H1 (cell line): ENCODE measurements at regions of chr4 and their contacts with region 1.

Region 1: DNA sequence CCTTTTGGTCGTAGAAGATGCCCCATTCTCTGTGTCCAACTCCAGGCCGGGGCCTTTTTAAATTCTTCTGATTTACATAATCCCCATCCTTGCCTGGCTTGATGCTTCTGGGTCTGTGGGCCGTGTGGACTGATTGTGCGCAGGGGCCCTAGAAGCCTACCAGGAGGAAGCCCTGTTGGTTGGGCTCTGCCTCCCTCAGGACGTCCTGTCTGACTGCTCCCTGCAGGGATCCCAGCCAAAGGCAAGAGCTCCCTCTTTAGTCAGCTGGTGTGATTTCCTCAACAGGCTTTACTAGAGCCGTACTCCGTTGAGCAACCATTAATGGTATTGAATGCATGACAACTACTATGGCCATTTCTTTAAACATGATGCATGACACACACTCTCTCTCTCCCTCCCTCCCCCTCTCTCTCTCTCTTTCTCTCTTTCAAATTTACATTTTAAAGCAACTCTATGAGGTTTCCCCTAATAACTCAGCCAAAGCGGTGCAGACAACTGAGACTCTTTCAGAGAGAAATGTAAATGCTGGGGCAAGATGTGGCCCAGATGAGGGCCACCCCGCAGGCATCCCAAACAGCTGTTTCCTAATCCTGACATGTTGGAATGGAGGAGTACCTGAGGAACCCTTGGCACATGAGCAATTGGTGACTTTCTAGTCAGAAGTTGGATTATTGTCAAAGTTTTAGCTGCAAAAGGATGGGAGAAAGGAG is 117.3 kb downstream of the DRD5 start:
- DNase-seq: peak; percentile 68 to 71
- H3K4me3 ChIP-seq: no peak overlapping the region
- H3K27ac ChIP-seq: no peak overlapping the region
- H3K4me1 ChIP-seq: peaks cover 0 to 3% (median 0%) of the 10 kb centered on the region in 4 experiments; a peak in 2 of 7 replicates
- H3K27me3 ChIP-seq: no peaks in the 10 kb centered on the region
- CTCF ChIP-seq: peak; percentile 56 to 90 (median 79)
- EP300 ChIP-seq: no peak
- POLR2A ChIP-seq: no peak
- RAD21 ChIP-seq: peak; percentile 84 to 91

Region 2: GRCh38 chr4:9885958-9886357 is 12.8 kb before region 1 on chr4:
- CTCF ChIA-PET with region 1: interaction called, 17 read pairs
- POLR2A ChIA-PET with region 1: no interaction called
- DNase-seq: no peak
- H3K4me3 ChIP-seq: no peak overlapping the region
- H3K27ac ChIP-seq: no peak overlapping the region
- H3K4me1 ChIP-seq: peaks cover 2 to 14% (median 8%) of the 10 kb centered on the region in 4 experiments
- H3K27me3 ChIP-seq: no peaks in the 10 kb centered on the region; a peak in 1 of 7 replicates
- CTCF ChIP-seq: no peak
- EP300 ChIP-seq: no peak
- POLR2A ChIP-seq: no peak
- RAD21 ChIP-seq: no peak

Region 3: DNA sequence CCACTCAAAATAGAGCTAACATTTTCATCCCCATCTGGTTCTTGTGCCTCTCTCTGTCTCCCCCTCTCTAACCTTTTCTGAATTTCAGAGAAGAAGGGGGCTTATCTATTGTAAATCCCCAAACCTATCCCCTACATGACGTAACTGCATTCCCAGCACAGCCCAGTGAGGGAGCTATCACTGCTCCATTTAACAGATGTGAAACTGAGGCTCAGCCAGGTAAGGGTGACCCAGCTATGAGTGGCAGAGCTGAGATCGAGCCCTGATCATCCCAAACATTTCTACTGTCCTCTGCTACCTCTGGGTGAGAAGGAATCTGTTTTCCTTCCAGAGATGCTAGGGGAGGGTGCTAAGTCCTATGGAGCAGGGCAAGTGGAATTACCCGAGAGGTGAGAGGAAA is 15.1 kb after region 1 on chr4:
- CTCF ChIA-PET with region 1: interaction called, 31 read pairs
- POLR2A ChIA-PET with region 1: no interaction called
- DNase-seq: no peak
- H3K4me3 ChIP-seq: no peak overlapping the region
- H3K27ac ChIP-seq: no peak overlapping the region
- H3K4me1 ChIP-seq: no peaks in the 10 kb centered on the region
- H3K27me3 ChIP-seq: no peaks in the 10 kb centered on the region
- CTCF ChIP-seq: no peak
- EP300 ChIP-seq: no peak
- POLR2A ChIP-seq: no peak
- RAD21 ChIP-seq: no peak

Region 4: GRCh38 chr4:9919047-9919446 is 20.3 kb after region 1 on chr4:
- CTCF ChIA-PET with region 1: interaction called, 31 read pairs
- POLR2A ChIA-PET with region 1: no interaction called
- DNase-seq: peak in 1 of 2 experiments; percentile 50
- H3K4me3 ChIP-seq: no peak overlapping the region
- H3K27ac ChIP-seq: no peak overlapping the region
- H3K4me1 ChIP-seq: peaks cover 0 to 8% (median 4%) of the 10 kb centered on the region in 4 experiments; a peak in 3 of 7 replicates
- H3K27me3 ChIP-seq: no peaks in the 10 kb centered on the region
- CTCF ChIP-seq: peak; percentile 38 to 61 (median 44)
- EP300 ChIP-seq: no peak
- POLR2A ChIP-seq: no peak
- RAD21 ChIP-seq: peak; percentile 48 to 60

Region 5: DNA sequence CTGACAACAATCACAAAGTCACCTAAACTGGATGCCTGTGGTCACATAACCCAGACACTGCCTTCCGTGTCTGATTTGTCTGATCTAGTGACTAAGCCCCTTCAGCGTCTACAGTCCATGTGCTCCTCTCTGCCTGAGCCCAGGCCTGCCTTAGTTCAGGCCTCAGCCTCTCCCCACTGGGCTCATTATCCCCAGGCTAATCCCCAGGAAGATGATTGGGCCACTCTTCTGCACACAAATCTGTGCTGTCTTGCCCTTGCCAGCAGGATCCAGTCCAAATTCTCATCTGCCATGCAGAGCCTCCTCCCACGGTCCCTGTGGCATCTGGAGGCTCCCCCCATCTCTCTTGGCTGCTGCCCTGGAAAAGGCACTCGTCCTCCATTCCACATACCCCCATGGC is 26.0 kb after region 1 on chr4:
- CTCF ChIA-PET with region 1: interaction called, 23 read pairs
- POLR2A ChIA-PET with region 1: no interaction called
- DNase-seq: no peak
- H3K4me3 ChIP-seq: no peak overlapping the region
- H3K27ac ChIP-seq: no peak overlapping the region
- H3K4me1 ChIP-seq: peaks cover 0 to 8% (median 4%) of the 10 kb centered on the region in 4 experiments; a peak in 3 of 7 replicates
- H3K27me3 ChIP-seq: no peaks in the 10 kb centered on the region
- CTCF ChIP-seq: no peak
- EP300 ChIP-seq: no peak
- POLR2A ChIP-seq: no peak
- RAD21 ChIP-seq: no peak

Region 6: GRCh38 chr4:10006231-10006600 is 107.5 kb after region 1 on chr4:
- CTCF ChIA-PET with region 1: no interaction called
- POLR2A ChIA-PET with region 1: no interaction called
- DNase-seq: no peak
- H3K4me3 ChIP-seq: no peak overlapping the region
- H3K27ac ChIP-seq: no peak overlapping the region
- H3K4me1 ChIP-seq: no peaks in the 10 kb centered on the region
- H3K27me3 ChIP-seq: no peaks in the 10 kb centered on the region; a peak in 1 of 7 replicates
- CTCF ChIP-seq: no peak
- EP300 ChIP-seq: no peak
- POLR2A ChIP-seq: no peak
- RAD21 ChIP-seq: no peak

Region 7: DNA sequence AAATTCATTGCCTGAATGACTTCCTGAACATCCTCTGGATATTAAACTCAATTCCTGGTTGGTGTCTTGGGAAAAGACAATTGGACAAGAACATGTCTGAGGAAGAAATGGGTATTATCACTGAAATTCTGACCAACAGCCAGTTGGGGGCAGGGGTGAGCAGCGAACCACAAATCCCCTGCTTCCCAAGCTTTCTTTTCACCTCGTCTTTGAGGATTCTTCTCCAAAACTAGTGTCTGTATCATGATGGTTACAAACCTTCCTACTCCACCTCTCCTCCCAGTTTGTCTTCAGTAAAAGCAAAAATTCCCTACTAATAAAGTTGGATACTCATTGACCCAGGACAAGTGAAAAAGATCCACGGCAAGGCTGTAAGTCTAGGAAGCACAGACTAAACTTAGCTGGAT is 266.1 kb after region 1 on chr4:
- CTCF ChIA-PET with region 1: no interaction called
- POLR2A ChIA-PET with region 1: no interaction called
- DNase-seq: peak; percentile 15 to 77
- H3K4me3 ChIP-seq: no peak overlapping the region
- H3K27ac ChIP-seq: no peak overlapping the region
- H3K4me1 ChIP-seq: no peaks in the 10 kb centered on the region
- H3K27me3 ChIP-seq: no peaks in the 10 kb centered on the region; a peak in 2 of 7 replicates
- CTCF ChIP-seq: peak; percentile 62 to 82 (median 66)
- EP300 ChIP-seq: no peak
- POLR2A ChIP-seq: no peak
- RAD21 ChIP-seq: peak; percentile 86 to 89